ENCODE measurements at regions of chr17 and their contacts with region 1.

Region 1: GRCh38 chr17:81101614-81102306 is 63.5 kb upstream of the PVALEF start:
- DNase-seq: peak; percentile 71
- ATAC-seq: peak; percentile 96
- H3K4me3 ChIP-seq: no peak overlapping the region
- H3K27ac ChIP-seq: no peak overlapping the region
- H3K4me1 ChIP-seq: peaks cover 12% of the 10 kb centered on the region
- H3K27me3 ChIP-seq: no peaks in the 10 kb centered on the region
- CTCF ChIP-seq: peak; percentile 100; the same call in 1 of the 2 replicates
- POLR2A ChIP-seq: no peak
- RAD21 ChIP-seq: peak; percentile 98

Region 2: GRCh38 chr17:80989586-80989913 is 112.2 kb before region 1 on chr17:
- CTCF ChIA-PET with region 1: no interaction called
- POLR2A ChIA-PET with region 1: no interaction called
- dilution Hi-C with region 1: no loop called
- in situ Hi-C with region 1: no loop called
- intact Hi-C with region 1: loop called (anchors 1 kb)
- DNase-seq: no peak
- ATAC-seq: no peak
- H3K4me3 ChIP-seq: no peak overlapping the region
- H3K27ac ChIP-seq: no peak overlapping the region
- H3K4me1 ChIP-seq: peaks cover 7% of the 10 kb centered on the region
- H3K27me3 ChIP-seq: no peaks in the 10 kb centered on the region
- CTCF ChIP-seq: no peak
- POLR2A ChIP-seq: no peak
- RAD21 ChIP-seq: no peak

Region 3: GRCh38 chr17:81018044-81018802 is 83.5 kb before region 1 on chr17:
- CTCF ChIA-PET with region 1: interaction called, 15 read pairs
- POLR2A ChIA-PET with region 1: interaction called, 3 read pairs
- dilution Hi-C with region 1: no loop called
- in situ Hi-C with region 1: no loop called
- intact Hi-C with region 1: loop called (anchors 1 kb)
- DNase-seq: peak; percentile 63
- ATAC-seq: peak; percentile 88
- H3K4me3 ChIP-seq: peak overlapping the region; percentile 21
- H3K27ac ChIP-seq: peak overlapping the region; percentile 78
- H3K4me1 ChIP-seq: peaks cover 9% of the 10 kb centered on the region
- H3K27me3 ChIP-seq: no peaks in the 10 kb centered on the region
- CTCF ChIP-seq: no peak
- POLR2A ChIP-seq: no peak
- RAD21 ChIP-seq: no peak

Region 4: GRCh38 chr17:81034779-81035388 is 66.9 kb before region 1 on chr17 and contains the start of gene BAIAP2:
- CTCF ChIA-PET with region 1: no interaction called
- POLR2A ChIA-PET with region 1: no interaction called
- dilution Hi-C with region 1: no loop called
- in situ Hi-C with region 1: loop called (anchors 5 kb)
- intact Hi-C with region 1: loop called (anchors 1 kb)
- DNase-seq: peak; percentile 90
- ATAC-seq: peak; percentile 93
- H3K4me3 ChIP-seq: peak within 1 kb of the TSS; percentile 94
- H3K27ac ChIP-seq: peak within 1 kb of the TSS; percentile 55; the same call in 1 of the 2 replicates
- H3K4me1 ChIP-seq: peaks cover 6% of the 10 kb centered on the region
- H3K27me3 ChIP-seq: no peaks in the 10 kb centered on the region
- CTCF ChIP-seq: peak; percentile 17; the same call in 1 of the 2 replicates
- POLR2A ChIP-seq: peak; percentile 99
- RAD21 ChIP-seq: 0 out of 2 replicates have a peak, but pooled peaks have one; percentile 24
- total RNA-seq, gene BAIAP2: 18.3 and 22.8 TPM in 2 replicates

Region 5: DNA sequence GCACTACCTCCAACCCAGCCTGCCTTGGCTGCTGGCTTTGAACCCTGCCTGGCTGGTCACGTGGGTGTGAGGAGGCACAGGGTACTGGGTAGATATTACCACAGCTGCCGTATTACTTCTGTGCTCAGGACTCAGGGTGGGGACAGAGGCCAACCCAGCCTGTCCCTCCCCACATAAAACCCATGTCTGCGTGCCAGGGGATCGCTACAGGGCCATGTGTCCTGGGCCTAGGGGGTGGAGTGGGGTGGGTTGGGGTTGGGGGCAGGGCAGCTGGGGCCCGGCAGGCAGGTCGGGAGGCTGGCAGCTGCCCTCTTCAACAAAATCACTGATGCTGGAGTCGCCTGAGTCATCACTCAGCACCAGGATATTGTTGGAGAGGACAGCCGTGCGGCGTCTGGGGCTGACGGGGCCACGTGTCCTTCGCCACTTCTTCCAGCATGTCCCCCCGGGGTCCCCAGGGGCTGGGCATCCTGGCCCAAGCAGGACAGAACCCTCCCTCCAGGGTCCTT is 23.9 kb after region 1 on chr17:
- CTCF ChIA-PET with region 1: no interaction called
- POLR2A ChIA-PET with region 1: no interaction called
- dilution Hi-C with region 1: no loop called
- in situ Hi-C with region 1: no loop called
- intact Hi-C with region 1: no loop called
- DNase-seq: no peak
- ATAC-seq: no peak
- H3K4me3 ChIP-seq: no peak overlapping the region
- H3K27ac ChIP-seq: no peak overlapping the region
- H3K4me1 ChIP-seq: no peaks in the 10 kb centered on the region
- H3K27me3 ChIP-seq: peaks cover 45% of the 10 kb centered on the region
- CTCF ChIP-seq: no peak
- POLR2A ChIP-seq: no peak
- RAD21 ChIP-seq: no peak

Measured in IMR-90 (cell line).